AG04450 (cell line): ENCODE measurements at regions of chr9 and their contacts with region 1.

Region 1: GRCh38 chr9:114906908-114907571 is 23.4 kb downstream of the TNFSF8 start:
- DNase-seq: no peak
- H3K4me3 ChIP-seq: no peak overlapping the region
- H3K27ac ChIP-seq: no peak overlapping the region
- H3K27me3 ChIP-seq: no peaks in the 10 kb centered on the region
- CTCF ChIP-seq: peak; percentile 83

Region 2: GRCh38 chr9:114662081-114662989 is 244.7 kb before region 1 on chr9:
- CTCF ChIA-PET with region 1: interaction called, 49 read pairs
- POLR2A ChIA-PET with region 1: no interaction called
- DNase-seq: no peak
- H3K4me3 ChIP-seq: no peak overlapping the region
- H3K27ac ChIP-seq: no peak overlapping the region
- H3K27me3 ChIP-seq: peaks cover 17% of the 10 kb centered on the region
- CTCF ChIP-seq: peak; percentile 93

Region 3: GRCh38 chr9:114674798-114675540 is 232.1 kb before region 1 on chr9:
- CTCF ChIA-PET with region 1: interaction called, 61 read pairs
- POLR2A ChIA-PET with region 1: no interaction called
- DNase-seq: no peak
- H3K4me3 ChIP-seq: no peak overlapping the region
- H3K27ac ChIP-seq: no peak overlapping the region
- H3K27me3 ChIP-seq: no peaks in the 10 kb centered on the region
- CTCF ChIP-seq: 0 out of 2 replicates have a peak, but pooled peaks have one; percentile 10

Region 4: DNA sequence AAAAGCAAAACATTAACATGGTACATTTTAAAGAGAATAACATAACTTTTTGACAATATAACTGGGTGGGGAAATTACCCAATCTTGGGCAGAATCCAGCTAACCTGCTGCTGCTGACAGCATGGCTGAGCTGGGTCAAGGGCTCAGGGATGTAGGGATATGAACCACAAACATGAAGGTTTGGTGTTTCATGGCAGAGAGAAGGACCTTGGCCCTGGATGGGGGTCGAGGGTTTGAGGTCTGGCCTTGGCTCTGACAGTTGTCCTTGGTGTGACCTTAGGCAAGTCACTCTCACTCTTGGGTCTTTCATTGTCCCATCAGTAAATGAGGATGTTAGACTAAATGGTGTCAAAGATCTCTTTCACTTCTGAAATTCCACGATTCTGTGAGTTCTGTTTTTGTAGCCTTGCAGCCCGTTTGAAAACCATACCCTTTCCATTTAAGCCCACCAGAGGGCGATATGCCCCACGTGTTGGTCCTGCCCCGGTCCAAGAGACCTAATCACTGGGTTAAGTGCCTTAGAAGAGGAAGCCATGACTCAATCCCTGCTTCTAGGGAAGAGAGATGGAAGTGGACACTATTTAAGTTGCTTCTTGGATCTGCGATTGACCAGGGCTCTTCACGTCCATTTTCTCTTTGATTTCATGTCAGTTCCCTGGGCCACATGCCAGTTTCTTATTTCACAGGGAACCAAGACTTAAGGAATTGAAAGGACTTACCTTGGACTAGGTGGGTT is 168.3 kb before region 1 on chr9:
- CTCF ChIA-PET with region 1: interaction called, 265 read pairs
- POLR2A ChIA-PET with region 1: no interaction called
- DNase-seq: peak; percentile 78
- H3K4me3 ChIP-seq: no peak overlapping the region
- H3K27ac ChIP-seq: no peak overlapping the region
- H3K27me3 ChIP-seq: no peaks in the 10 kb centered on the region
- CTCF ChIP-seq: peak; percentile 92

Region 5: DNA sequence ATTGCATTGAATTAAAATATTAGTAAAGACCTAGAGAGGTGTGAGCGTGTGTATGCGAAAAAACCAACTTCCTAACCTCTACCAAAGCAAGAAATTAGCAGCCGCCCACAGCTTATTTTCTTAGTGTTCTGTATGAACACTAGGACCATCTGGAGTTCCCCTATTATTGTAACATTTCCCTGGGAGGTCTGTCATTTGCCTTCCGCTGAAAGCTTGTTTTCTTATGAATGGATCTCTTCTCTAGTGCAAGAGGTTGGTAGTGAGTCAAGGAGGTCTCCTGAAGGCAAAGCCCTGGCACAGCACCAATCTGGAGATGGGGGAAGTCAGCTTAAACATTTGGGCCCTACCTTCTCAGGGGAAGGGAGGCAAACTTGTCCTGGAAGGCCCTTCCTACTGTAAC is 12.6 kb after region 1 on chr9:
- CTCF ChIA-PET with region 1: interaction called, 16 read pairs
- POLR2A ChIA-PET with region 1: no interaction called
- DNase-seq: no peak
- H3K4me3 ChIP-seq: no peak overlapping the region
- H3K27ac ChIP-seq: no peak overlapping the region
- H3K27me3 ChIP-seq: peaks cover 11% of the 10 kb centered on the region
- CTCF ChIP-seq: no peak

Region 6: DNA sequence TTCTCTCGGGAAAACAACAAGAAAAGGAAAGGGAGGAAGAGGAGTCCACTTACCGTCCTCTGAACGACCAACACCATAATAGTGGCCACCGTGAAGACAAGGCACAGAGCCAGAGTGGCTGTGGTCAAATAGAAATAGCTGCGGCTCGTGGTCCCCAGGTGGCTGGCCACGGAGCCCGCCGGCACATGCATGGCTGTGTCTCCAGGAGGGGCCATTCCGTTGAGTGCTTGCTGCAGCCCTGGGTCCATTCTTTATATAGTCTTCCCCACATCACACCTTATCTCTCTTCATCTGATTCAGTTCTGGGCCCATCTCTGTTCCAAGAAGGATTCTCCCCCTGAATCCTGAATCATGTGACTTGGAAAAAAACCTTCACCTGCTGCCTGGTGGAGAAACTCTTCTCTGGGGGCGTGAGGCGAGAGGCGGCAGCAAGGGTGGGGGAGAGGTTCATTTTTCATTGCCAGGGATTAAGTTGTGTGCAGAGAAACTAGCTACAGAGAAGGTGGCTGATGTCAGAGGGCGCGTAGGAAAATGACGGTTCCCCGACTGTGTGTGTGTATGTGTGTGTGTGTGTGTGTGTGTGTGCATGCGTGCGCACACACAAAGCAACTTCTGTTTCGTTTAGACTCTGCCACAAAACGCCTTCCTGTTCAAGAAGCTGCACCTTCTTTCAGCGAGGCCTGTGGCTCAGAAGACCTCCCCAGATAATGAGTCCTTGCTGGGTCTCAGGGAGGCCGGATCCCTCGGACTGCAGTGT is 23.2 kb after region 1 on chr9 and contains the start of gene TNFSF8:
- CTCF ChIA-PET with region 1: interaction called, 10 read pairs
- POLR2A ChIA-PET with region 1: interaction called, 5 read pairs
- DNase-seq: no peak
- H3K4me3 ChIP-seq: no peak within 1 kb of the TSS
- H3K27ac ChIP-seq: no peak within 1 kb of the TSS
- H3K27me3 ChIP-seq: peaks cover 56% of the 10 kb centered on the region
- CTCF ChIP-seq: no peak
- polyA plus RNA-seq, gene TNFSF8: not detected in 2 replicates

Region 7: GRCh38 chr9:115013998-115014397 is 107.0 kb after region 1 on chr9:
- CTCF ChIA-PET with region 1: interaction called, 76 read pairs
- POLR2A ChIA-PET with region 1: no interaction called
- DNase-seq: peak; percentile 69
- H3K4me3 ChIP-seq: no peak overlapping the region
- H3K27ac ChIP-seq: no peak overlapping the region
- H3K27me3 ChIP-seq: no peaks in the 10 kb centered on the region
- CTCF ChIP-seq: peak; percentile 87

Region 8: GRCh38 chr9:115117999-115118878 is 211.2 kb after region 1 on chr9 and contains the start of gene TNC:
- CTCF ChIA-PET with region 1: no interaction called
- POLR2A ChIA-PET with region 1: no interaction called
- DNase-seq: peak; percentile 79
- H3K4me3 ChIP-seq: peak within 1 kb of the TSS; percentile 77
- H3K27ac ChIP-seq: peak within 1 kb of the TSS; percentile 92
- H3K27me3 ChIP-seq: no peaks in the 10 kb centered on the region
- CTCF ChIP-seq: no peak
- polyA plus RNA-seq, gene TNC: 265 and 319 TPM in 2 replicates